Heart right ventricle (tissue), 16 donors: ENCODE measurements at regions of chr4 and their contacts with region 1.

Region 1: GRCh38 chr4:88442703-88443191 is 14.2 kb upstream of the HERC5 start:
- DNase-seq: no peak
- ATAC-seq: no peak
- H3K4me3 ChIP-seq: no peak overlapping the region
- H3K27ac ChIP-seq: no peak overlapping the region
- H3K4me1 ChIP-seq: peaks cover 0 to 14% (median 0%) of the 10 kb centered on the region in 9 donors
- H3K27me3 ChIP-seq: no peaks in the 10 kb centered on the region
- CTCF ChIP-seq: no peak

Region 2: DNA sequence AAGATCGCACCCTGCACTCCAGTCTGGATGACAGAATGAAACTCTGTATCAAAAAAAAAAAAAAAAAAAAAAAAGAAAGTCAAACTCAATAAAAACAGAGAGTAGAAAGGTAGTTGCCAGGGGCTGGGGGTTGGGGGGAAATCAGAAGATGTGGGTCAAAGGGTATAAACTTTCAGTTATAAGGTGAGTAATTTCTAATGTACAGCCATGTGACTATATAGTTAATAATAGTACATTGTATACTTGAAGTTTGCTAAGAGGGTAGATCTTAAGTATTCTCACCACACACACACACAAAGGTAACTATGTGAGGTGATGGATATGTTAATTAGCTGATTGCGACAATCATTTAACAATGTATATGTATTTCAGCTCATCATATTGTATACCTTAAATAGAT is 52.6 kb before region 1 on chr4:
- intact Hi-C with region 1: loop called in 2 of 10 experiments (anchors 5 to 10 kb)
- DNase-seq: no peak
- ATAC-seq: no peak
- H3K4me3 ChIP-seq: no peak overlapping the region
- H3K27ac ChIP-seq: no peak overlapping the region
- H3K4me1 ChIP-seq: no peaks in the 10 kb centered on the region
- H3K27me3 ChIP-seq: no peaks in the 10 kb centered on the region
- CTCF ChIP-seq: no peak

Region 3: DNA sequence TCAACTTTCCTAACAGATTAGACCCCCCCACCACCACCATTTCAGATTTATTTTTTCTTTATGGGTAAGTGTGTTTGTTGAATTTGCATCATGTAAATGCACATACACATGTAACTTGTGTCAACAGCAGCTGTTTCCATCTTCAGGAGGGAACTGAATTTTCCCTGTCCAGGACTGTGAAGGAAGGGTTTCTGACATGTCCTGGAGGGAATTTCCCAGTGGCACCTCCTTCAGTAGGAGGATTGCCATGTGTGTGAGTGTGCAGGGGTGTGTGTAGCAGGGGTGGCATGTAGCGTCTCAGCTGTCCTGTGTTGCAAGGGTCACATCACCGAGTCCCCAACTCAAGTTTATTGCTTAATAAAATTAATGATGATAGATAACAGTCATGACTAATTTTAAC is 44.4 kb before region 1 on chr4:
- intact Hi-C with region 1: loop called in 2 of 10 experiments (anchors 5 to 10 kb)
- DNase-seq: no peak
- ATAC-seq: no peak
- H3K4me3 ChIP-seq: no peak overlapping the region
- H3K27ac ChIP-seq: no peak overlapping the region
- H3K4me1 ChIP-seq: no peaks in the 10 kb centered on the region
- H3K27me3 ChIP-seq: no peaks in the 10 kb centered on the region
- CTCF ChIP-seq: no peak